Heart left ventricle (tissue), 16 donors: ENCODE measurements at regions of chr18 and their contacts with region 1.

Region 1: GRCh38 chr18:58476516-58477256 is 152.2 kb downstream of the ALPK2 start:
- DNase-seq: no peak
- ATAC-seq: peak in 3 of 4 donors; percentile 33 to 43 (median 40)
- H3K4me3 ChIP-seq: no peak overlapping the region
- H3K27ac ChIP-seq: no peak overlapping the region
- H3K4me1 ChIP-seq: peaks cover 0 to 8% (median 0%) of the 10 kb centered on the region in 12 donors
- H3K27me3 ChIP-seq: no peaks in the 10 kb centered on the region
- CTCF ChIP-seq: no peak
- POLR2A ChIP-seq: no peak

Region 2: DNA sequence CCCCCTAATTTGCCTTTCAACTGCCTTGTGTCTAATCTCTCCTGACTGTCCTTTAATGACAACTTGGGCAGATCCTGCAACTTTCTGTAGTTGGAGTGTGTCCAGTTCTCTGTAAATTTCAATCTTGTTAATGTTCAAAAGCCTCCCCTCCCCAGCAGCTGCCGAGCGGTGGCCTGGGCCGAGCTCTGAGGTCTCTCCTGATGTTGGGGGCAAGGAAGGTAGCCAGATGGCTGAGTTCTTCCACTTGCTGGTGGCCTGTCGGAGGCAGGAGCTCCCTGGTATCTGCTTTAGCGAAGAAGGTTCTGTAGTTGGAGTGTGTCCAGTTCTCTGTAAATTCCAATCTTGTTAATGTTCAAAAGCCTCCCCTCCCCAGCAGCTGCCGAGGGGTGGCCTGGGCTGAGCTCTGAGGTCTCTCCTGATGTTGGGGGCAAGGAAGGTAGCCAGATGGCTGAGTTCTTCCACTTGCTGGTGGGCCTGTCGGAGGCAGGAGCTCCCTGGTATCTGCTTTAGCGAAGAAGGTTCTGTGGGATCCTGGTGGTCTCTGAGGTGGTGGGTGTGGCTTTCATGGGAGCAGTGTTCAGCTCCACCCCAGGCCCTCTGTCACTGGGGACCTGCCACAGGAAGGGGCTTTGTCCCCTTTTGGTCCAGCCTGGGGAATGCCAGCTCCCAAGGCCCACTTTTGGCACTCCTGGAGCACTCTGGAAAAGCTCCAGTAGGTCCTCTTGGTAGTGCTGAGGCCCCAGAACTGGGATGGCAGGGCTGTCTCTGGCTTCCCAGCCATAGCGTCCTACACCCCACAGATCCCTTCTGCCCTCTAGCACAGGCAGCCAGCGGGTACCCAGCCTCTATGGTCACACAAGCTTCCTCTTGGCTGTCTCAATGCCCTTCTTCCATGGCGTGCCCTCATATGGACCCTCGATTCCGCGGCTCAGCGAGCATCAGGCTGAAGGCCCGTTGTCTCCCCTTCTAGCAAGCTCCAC is 59.7 kb before region 1 on chr18:
- intact Hi-C with region 1: loop called in 2 of 10 experiments (anchors 10 kb)
- DNase-seq: no peak
- ATAC-seq: peak in 1 of 4 donors; percentile 24
- H3K4me3 ChIP-seq: no peak overlapping the region
- H3K27ac ChIP-seq: peak overlapping the region in 1 of 12 donors; percentile 3
- H3K4me1 ChIP-seq: peaks cover 0 to 8% (median 0%) of the 10 kb centered on the region in 12 donors
- H3K27me3 ChIP-seq: no peaks in the 10 kb centered on the region
- CTCF ChIP-seq: no peak
- POLR2A ChIP-seq: no peak

Region 3: DNA sequence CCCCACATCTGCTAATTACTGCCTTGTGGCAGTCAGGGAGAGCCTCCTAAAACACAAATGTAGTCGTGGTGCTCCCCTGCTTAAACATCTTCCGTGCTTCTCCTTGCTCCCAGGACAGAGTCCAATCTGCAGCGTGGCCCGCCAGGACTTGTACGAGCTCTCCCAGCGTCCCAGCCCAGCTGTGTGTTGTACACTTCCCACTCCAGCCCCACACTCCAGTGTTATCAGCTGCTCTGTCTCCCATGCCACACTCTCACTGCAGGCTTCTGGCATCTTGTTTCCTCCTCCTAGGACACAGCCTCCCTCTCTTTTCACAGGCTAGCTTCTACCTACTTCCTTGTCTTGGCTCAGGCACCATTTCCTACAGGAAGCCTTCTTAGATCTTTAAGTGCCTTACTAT is 47.2 kb before region 1 on chr18:
- intact Hi-C with region 1: loop called in 2 of 10 experiments (anchors 5 to 10 kb)
- DNase-seq: no peak
- ATAC-seq: peak in 1 of 4 donors; percentile 56
- H3K4me3 ChIP-seq: no peak overlapping the region
- H3K27ac ChIP-seq: no peak overlapping the region
- H3K4me1 ChIP-seq: no peaks in the 10 kb centered on the region
- H3K27me3 ChIP-seq: no peaks in the 10 kb centered on the region
- CTCF ChIP-seq: no peak
- POLR2A ChIP-seq: no peak

Region 4: GRCh38 chr18:58447402-58448095 is 29.1 kb before region 1 on chr18:
- intact Hi-C with region 1: no loop called
- DNase-seq: no peak
- ATAC-seq: no peak
- H3K4me3 ChIP-seq: no peak overlapping the region
- H3K27ac ChIP-seq: peak overlapping the region in 1 of 12 donors; percentile 34
- H3K4me1 ChIP-seq: no peaks in the 10 kb centered on the region
- H3K27me3 ChIP-seq: no peaks in the 10 kb centered on the region
- CTCF ChIP-seq: no peak
- POLR2A ChIP-seq: no peak